ENCODE measurements at regions of chr6 and their contacts with region 1.

Region 1: DNA sequence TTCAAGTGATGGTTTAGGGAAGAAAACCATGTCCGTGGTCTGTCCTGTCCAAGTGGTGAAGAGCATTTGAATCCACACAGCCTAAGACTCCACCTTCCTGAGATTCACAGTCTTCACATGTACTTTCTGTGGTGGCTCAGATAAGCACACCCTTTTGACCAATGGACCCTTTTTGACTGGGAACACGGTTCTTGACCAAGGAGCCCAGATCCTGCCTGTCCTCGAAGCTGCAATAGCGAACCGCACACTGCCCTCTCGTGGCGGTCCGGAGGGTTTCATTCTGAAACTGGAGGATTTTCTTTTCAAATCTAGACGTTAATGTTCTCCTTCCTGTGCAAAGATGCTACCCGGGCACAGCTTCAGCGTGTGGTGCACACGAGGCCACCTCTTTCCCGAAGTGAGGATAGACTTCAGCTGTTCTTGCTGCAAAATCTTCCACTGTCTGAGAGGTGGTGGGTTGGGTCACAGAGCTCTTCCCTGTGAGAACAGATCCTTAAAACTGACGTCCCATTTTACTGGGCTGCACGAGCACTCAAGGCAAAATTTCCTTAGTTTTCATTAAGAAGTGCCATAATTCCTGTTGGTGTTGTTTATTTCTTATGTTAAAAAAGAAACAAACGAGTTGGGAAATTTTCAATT is 90.5 kb downstream of the SYNJ2 start:
- DNase-seq: peak; percentile 83
- H3K4me3 ChIP-seq: peak overlapping the region in 1 of 2 experiments; percentile 14; a peak in 1 of 4 replicates
- H3K27ac ChIP-seq: peak overlapping the region in 1 of 2 experiments; percentile 76; a peak in 2 of 4 replicates
- H3K4me1 ChIP-seq: peaks cover 11 to 30% of the 10 kb centered on the region in 2 experiments; a peak in 3 of 4 replicates
- H3K27me3 ChIP-seq: no peaks in the 10 kb centered on the region
- CTCF ChIP-seq: peak; percentile 86
- EP300 ChIP-seq: no peak
- RAD21 ChIP-seq: peak; percentile 92

Region 2: DNA sequence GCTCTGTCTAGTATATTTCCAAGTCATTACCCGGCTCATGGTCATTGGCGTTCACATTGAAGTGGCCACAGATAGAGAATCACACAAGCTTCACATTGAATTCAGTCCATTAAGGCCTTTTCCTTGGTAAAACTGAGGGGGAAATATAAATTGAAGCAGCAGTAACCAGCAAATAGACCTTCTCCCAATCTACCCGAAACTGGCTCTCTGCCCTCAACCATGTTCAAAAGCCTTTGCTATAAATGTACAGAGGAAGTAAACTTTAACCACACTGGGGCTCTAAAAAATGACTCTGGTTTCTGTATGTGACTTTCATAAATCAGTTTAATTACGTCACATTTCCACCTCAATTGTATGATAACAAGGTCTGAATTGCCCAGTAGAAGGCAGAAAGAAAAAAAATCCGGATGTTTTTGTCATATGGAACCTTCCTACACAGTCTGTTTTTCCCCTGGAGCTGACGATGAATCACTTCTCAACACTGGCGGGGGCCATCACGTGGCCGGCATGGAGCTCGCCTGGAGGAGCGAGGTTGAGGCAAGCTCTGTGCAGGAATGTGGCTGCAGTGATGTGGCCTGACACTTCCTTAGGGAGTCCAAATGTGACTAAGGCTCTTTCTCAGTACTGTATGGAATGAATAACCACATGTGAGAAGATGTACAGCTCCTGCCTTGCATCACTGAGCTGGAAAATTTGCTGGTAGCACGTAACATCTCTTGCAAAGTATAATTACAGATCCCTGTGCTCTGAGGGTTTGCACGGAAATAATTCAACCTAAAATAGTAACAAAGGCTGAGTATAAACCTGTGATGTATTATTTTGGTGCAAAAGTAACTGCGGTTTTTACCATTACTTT is 307.8 kb before region 1 on chr6:
- CTCF ChIA-PET with region 1: interaction called, 10 read pairs
- POLR2A ChIA-PET with region 1: no interaction called
- DNase-seq: no peak
- H3K4me3 ChIP-seq: no peak overlapping the region
- H3K27ac ChIP-seq: peak overlapping the region; percentile 82 to 95
- H3K4me1 ChIP-seq: peaks cover 17 to 32% of the 10 kb centered on the region in 2 experiments
- H3K27me3 ChIP-seq: no peaks in the 10 kb centered on the region
- CTCF ChIP-seq: no peak
- EP300 ChIP-seq: peak in 1 of 2 experiments; percentile 78; a peak in 2 of 4 replicates
- RAD21 ChIP-seq: no peak

Region 3: GRCh38 chr6:157981395-157982296 is 90.6 kb before region 1 on chr6 and contains the start of gene SYNJ2:
- CTCF ChIA-PET with region 1: interaction called, 19 read pairs
- POLR2A ChIA-PET with region 1: no interaction called
- DNase-seq: peak; percentile 91
- H3K4me3 ChIP-seq: peak within 1 kb of the TSS; percentile 64 to 87
- H3K27ac ChIP-seq: peak within 1 kb of the TSS in 1 of 2 experiments; percentile 39; a peak in 1 of 4 replicates
- H3K4me1 ChIP-seq: peaks cover 12 to 19% of the 10 kb centered on the region in 2 experiments; a peak in 3 of 4 replicates
- H3K27me3 ChIP-seq: no peaks in the 10 kb centered on the region
- CTCF ChIP-seq: peak; percentile 62
- EP300 ChIP-seq: 0 out of 4 replicates have a peak, but pooled peaks of 1 of the 2 experiments have one; percentile 35
- RAD21 ChIP-seq: no peak
- polyA plus RNA-seq, gene SYNJ2: 35.3 and 40.0 TPM in 2 replicates

Region 4: DNA sequence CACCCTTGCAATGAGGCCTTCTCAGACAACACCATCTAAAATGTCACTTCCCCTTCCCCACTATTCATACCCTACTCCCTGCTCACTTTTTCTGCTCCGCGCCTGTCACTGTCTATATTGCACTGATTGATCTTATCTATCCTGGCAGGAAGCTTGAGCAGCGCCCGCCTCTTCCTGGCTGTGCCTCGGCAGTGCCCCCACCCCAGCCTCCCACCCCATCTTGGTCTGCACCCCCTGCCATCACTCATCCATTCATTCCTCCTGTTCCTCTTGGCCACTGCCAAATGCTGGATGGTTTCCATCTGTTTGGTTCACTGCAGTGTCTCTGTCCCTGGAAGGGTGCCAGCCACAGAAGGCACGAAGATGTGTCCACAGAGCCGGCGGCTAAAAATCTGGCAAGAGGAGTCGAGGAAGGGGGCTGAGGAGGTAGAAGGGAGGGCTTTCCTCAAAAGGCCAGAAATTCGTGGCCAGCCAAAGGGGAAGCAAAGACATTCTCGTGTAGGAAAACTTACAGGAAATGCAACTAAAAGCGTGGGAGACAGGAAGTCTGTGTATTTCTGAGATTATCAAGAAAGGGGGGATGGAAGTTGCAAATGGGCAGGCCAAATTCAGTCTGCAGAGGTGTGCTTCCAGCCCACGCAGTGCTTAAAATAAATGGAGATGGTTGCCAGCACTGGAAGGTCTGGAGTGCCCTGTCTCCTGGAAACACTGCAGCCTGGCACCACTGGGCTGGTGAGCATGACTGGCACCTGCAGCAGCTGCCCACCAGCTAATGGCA is 62.9 kb before region 1 on chr6:
- CTCF ChIA-PET with region 1: interaction called, 11 read pairs
- POLR2A ChIA-PET with region 1: no interaction called
- DNase-seq: peak; percentile 86
- H3K4me3 ChIP-seq: peak overlapping the region in 1 of 2 experiments; percentile 1; a peak in 1 of 4 replicates
- H3K27ac ChIP-seq: peak overlapping the region; percentile 85 to 88
- H3K4me1 ChIP-seq: peaks cover 23 to 30% of the 10 kb centered on the region in 2 experiments; a peak in 3 of 4 replicates
- H3K27me3 ChIP-seq: no peaks in the 10 kb centered on the region
- CTCF ChIP-seq: no peak
- EP300 ChIP-seq: peak in 1 of 2 experiments; percentile 63; a peak in 1 of 4 replicates
- RAD21 ChIP-seq: no peak

Region 5: GRCh38 chr6:158049055-158050028 is 22.9 kb before region 1 on chr6:
- CTCF ChIA-PET with region 1: interaction called, 29 read pairs
- POLR2A ChIA-PET with region 1: interaction called, 5 read pairs
- DNase-seq: peak; percentile 54
- H3K4me3 ChIP-seq: no peak overlapping the region
- H3K27ac ChIP-seq: no peak overlapping the region
- H3K4me1 ChIP-seq: no peaks in the 10 kb centered on the region; a peak in 1 of 4 replicates
- H3K27me3 ChIP-seq: no peaks in the 10 kb centered on the region
- CTCF ChIP-seq: no peak
- EP300 ChIP-seq: no peak
- RAD21 ChIP-seq: no peak

Region 6: GRCh38 chr6:158086504-158087223 is 14.5 kb after region 1 on chr6:
- CTCF ChIA-PET with region 1: interaction called, 19 read pairs
- POLR2A ChIA-PET with region 1: interaction called, 3 read pairs
- DNase-seq: peak; percentile 26
- H3K4me3 ChIP-seq: no peak overlapping the region
- H3K27ac ChIP-seq: peak overlapping the region in 1 of 2 experiments; percentile 14; a peak in 1 of 4 replicates
- H3K4me1 ChIP-seq: no peaks in the 10 kb centered on the region
- H3K27me3 ChIP-seq: no peaks in the 10 kb centered on the region
- CTCF ChIP-seq: no peak
- EP300 ChIP-seq: no peak
- RAD21 ChIP-seq: no peak

Region 7: DNA sequence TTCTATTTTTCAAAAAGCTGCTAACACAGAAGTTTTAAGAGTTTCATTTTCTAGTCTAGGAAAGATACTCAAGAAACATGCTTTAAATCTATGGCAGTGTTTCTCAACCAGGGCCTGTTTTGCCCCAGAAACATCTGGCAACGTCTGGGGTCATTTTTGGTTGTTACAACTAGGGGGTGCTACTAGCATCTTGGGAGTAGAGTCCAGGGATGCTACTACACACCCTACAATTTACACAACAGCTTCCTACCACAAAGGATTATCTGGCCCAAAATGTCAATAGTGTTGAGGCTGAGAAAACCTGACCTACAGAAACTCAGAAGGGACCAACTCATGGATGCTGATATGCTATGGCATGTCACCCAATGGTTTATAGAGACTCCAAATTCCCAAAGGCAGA is 71.5 kb after region 1 on chr6:
- CTCF ChIA-PET with region 1: no interaction called
- POLR2A ChIA-PET with region 1: no interaction called
- DNase-seq: no peak
- H3K4me3 ChIP-seq: no peak overlapping the region
- H3K27ac ChIP-seq: no peak overlapping the region
- H3K4me1 ChIP-seq: peaks cover 0 to 6% of the 10 kb centered on the region in 2 experiments; a peak in 1 of 4 replicates
- H3K27me3 ChIP-seq: no peaks in the 10 kb centered on the region
- CTCF ChIP-seq: peak; percentile 40
- EP300 ChIP-seq: no peak
- RAD21 ChIP-seq: no peak; the same call in 1 of the 2 replicates

Region 8: DNA sequence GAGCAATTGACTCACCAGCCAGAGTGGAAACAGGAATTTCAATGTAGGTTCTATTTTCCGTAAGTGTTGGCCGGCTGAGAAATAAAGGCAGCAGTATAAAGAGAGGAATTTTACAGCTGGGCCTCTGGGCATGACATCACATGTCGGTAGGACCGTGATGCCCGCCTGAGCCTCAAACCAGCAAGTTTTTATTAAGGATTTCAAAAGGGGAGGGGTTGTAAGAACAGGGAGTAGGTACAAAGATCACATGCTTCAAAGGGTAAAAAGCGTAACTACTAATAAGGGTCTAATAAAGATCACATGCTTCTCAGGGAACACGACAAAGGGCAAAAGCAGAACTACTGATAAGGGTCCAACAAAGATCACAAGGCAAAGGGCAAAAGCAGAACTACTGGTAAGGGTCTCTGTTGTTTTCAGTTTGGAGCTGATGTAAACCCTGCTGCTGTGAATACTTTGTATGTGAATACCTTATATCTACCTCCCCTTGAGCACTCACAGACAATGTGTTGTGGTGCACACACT is 231.1 kb after region 1 on chr6:
- CTCF ChIA-PET with region 1: no interaction called
- POLR2A ChIA-PET with region 1: no interaction called
- DNase-seq: no peak
- H3K4me3 ChIP-seq: no peak overlapping the region
- H3K27ac ChIP-seq: no peak overlapping the region
- H3K4me1 ChIP-seq: peaks cover 0 to 7% of the 10 kb centered on the region in 2 experiments; a peak in 2 of 4 replicates
- H3K27me3 ChIP-seq: no peaks in the 10 kb centered on the region
- CTCF ChIP-seq: no peak
- EP300 ChIP-seq: no peak
- RAD21 ChIP-seq: no peak

Region 9: GRCh38 chr6:158488065-158488464 is 415.9 kb after region 1 on chr6:
- CTCF ChIA-PET with region 1: no interaction called
- POLR2A ChIA-PET with region 1: no interaction called
- DNase-seq: no peak
- H3K4me3 ChIP-seq: no peak overlapping the region
- H3K27ac ChIP-seq: peak overlapping the region; percentile 30 to 79; a peak in 3 of 4 replicates
- H3K4me1 ChIP-seq: peaks cover 0 to 18% of the 10 kb centered on the region in 2 experiments; a peak in 2 of 4 replicates
- H3K27me3 ChIP-seq: no peaks in the 10 kb centered on the region
- CTCF ChIP-seq: no peak
- EP300 ChIP-seq: peak in 1 of 2 experiments; percentile 73; a peak in 2 of 4 replicates
- RAD21 ChIP-seq: no peak

Measured in SK-N-SH (cell line).